Endothelial cell of umbilical vein (primary cell): ENCODE measurements at regions of chr19 and their contacts with region 1.

Region 1: DNA sequence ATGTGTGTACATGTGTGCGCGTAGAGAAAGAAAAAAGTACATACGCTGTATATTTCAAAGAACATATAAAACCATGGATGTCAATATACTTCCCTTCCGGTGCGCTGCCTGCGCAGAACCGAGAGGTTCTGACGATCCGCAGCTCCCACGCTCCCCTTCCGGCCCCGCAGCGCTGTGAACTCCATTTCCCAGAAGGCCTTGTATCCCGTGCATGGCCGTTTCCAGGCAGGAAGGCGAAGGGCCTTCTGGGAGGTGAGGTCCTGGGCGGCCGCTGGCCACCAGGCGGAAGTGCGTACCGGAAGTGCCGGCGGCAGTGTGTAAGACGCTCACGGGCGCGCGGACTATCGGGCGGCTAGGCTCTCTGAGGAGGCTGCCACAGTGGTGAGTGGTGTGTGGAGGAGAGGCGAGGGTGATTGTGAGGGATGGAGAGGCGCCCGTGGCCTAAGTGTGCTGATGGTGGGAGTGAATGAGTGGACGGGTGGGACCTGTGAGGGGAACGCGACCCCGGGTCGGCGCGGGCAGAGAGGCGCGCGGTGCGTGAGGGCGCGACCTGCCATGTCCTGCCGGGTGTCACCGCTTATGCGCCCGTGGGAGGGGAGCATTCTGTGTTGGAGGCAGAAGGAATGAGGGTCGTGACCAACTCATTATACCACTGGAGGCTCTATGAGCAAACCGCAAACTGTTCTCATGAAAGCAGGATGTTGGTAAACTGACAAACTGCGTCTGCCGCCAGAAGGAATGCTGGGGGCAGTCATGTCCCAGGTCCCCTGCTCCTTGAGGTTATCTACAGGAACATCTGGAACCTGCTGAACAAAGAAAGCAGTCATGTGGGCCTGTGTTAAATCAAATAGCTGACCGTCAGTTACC is at the start of gene ERVK3-1:
- DNase-seq: peak; percentile 98
- H3K4me3 ChIP-seq: peak within 1 kb of the TSS; percentile 44 to 72 (median 49)
- H3K27ac ChIP-seq: peak within 1 kb of the TSS; percentile 95
- H3K4me1 ChIP-seq: peaks cover 9% of the 10 kb centered on the region
- H3K27me3 ChIP-seq: no peaks in the 10 kb centered on the region
- CTCF ChIP-seq: no peak
- POLR2A ChIP-seq: peak; percentile 92
- total RNA-seq, gene ERVK3-1: 25.8 and 28.4 TPM in 2 replicates

Region 2: DNA sequence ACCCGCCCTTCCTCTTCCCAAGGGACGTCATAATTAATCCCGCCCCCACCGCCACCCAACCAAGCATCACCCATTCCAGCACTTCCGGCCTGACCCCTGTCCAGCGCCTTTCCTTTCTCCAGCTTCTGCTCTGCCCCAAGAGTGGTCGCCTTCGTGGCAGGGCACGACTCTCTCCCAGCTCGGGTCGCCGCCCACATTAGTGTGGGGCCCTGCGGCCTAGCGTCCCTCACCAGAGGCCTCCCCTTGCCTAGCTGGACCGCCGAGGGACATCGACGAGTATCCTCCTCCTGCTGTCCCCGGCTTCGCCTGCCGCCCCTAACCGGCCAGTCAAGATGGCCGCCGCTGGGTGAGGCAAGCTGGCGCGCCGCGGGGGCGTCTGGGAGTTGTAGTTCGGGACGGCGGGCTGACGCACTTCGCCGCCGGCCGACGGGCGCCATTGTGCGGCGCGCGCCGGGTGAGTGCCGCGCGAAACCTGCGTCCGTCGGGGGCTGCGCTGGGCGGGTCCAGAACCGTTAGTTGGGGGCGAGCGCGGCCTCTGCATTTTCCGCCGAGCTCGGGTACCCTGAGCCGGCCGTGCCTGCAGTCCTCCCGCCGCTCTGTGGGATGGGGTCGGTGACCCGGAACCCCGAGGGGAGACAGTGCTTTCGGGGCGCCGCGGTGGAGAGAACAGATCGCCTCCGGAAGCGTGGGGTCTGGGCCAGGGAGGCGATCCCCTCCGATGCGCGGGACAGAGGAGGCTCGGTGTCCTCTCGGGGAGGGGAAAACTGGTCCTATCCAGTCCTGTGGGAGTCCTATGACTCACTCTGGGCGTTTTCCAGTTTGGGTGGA is 122.1 kb before region 1 on chr19 and contains the start of gene ZNF274:
- CTCF ChIA-PET with region 1: no interaction called
- POLR2A ChIA-PET with region 1: no interaction called
- dilution Hi-C with region 1: no loop called
- intact Hi-C with region 1: no loop called
- DNase-seq: peak; percentile 88
- H3K4me3 ChIP-seq: peak within 1 kb of the TSS; percentile 18 to 98 (median 62)
- H3K27ac ChIP-seq: peak within 1 kb of the TSS; percentile 89
- H3K4me1 ChIP-seq: no peaks in the 10 kb centered on the region
- H3K27me3 ChIP-seq: no peaks in the 10 kb centered on the region
- CTCF ChIP-seq: no peak
- POLR2A ChIP-seq: peak; percentile 7
- total RNA-seq, gene ZNF274: 18.3 and 18.8 TPM in 2 replicates

Region 3: GRCh38 chr19:58218899-58219298 is 86.4 kb before region 1 on chr19:
- CTCF ChIA-PET with region 1: interaction called, 3 read pairs
- POLR2A ChIA-PET with region 1: no interaction called
- dilution Hi-C with region 1: no loop called
- intact Hi-C with region 1: loop called (anchors 1 kb)
- DNase-seq: peak; percentile 20
- H3K4me3 ChIP-seq: no peak overlapping the region
- H3K27ac ChIP-seq: no peak overlapping the region
- H3K4me1 ChIP-seq: no peaks in the 10 kb centered on the region
- H3K27me3 ChIP-seq: no peaks in the 10 kb centered on the region
- CTCF ChIP-seq: peak in 1 of 2 donors; percentile 50
- POLR2A ChIP-seq: no peak

Region 4: DNA sequence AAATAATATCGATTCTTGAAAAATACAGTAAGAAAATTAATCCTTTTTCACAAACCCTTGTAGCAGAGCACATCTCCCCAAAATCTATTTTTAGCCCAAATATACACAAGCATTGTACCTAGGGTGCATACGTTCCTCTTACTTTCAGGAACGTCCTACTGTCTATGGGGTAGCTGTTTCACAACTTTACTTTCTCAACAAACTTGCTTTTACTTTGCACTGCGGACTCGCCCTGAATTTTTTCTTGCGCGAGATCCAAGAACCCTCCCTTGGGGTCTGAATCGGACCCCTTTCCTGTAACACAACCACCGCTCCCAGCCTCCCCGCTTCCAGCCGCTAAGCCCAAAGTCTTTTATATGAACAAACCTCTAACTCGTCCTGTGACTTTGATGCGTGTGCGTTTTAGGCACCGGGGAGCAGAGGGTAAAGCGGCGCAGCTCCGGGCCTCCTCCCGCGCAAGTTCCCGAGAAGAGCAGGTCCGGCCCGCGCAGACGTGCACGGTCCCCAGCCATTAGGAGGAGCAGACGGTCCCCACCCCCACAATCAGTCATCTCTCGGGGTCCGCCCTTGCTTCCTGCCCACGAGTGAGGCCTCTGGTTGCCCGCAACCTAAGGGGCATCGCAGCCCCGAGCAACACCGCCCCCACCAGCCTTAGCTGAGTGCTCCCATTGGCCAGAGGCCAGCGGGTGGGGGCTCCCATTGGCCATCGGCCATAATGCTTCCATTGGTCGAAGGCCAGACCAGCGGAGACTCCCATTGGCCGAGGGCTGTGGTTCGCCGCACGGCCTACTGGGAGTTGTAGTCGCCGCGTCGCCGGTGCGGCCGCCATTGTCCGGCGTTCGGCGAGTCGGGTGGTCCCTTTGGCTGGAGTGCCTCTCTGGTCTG is 26.9 kb before region 1 on chr19 and contains the start of gene ZNF8:
- CTCF ChIA-PET with region 1: no interaction called
- POLR2A ChIA-PET with region 1: interaction called, 3 read pairs
- dilution Hi-C with region 1: no loop called
- intact Hi-C with region 1: loop called (anchors 1 kb)
- DNase-seq: peak; percentile 99
- H3K4me3 ChIP-seq: peak within 1 kb of the TSS; percentile 67 to 72 (median 70)
- H3K27ac ChIP-seq: peak within 1 kb of the TSS; percentile 76
- H3K4me1 ChIP-seq: peaks cover 8% of the 10 kb centered on the region
- H3K27me3 ChIP-seq: no peaks in the 10 kb centered on the region
- CTCF ChIP-seq: peak in 1 of 2 donors; percentile 22
- POLR2A ChIP-seq: peak; percentile 68
- total RNA-seq, gene ZNF8: 6.3 and 6.8 TPM in 2 replicates